H1 (cell line): ENCODE measurements at regions of chr17 and their contacts with region 1.

Region 1: DNA sequence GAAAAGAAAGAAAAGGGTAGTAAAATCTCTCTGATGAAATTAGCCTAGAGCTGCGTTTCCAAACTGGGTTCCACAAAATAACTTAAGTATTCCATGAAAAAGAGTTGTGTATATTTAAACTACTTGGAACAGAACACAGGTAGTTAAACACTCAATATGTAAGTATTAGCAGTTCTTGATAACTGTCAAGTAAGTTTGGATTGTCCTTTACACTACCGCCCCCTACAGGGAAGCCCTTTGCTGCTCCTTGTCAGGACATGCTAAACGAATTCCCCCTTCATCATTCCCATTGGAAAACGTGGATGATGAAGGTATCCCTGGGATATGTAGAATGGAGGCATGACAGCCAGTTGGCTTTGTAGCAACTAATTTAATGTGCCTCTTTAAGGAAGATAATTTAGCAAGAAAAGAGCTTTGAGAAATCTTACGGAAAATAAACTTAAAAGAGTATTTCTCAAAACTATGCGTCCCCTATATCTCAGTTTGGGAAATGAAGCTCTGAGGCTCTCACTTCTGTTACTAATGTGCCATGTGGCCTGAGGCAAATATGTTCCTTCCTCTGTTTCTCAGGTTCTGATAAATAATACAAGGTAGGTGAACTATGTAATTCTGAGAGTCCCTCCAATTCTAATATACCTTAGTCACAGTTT is 18.8 kb downstream of the NCBP3 start:
- DNase-seq: peak in 1 of 2 experiments; percentile 80
- H3K4me3 ChIP-seq: no peak overlapping the region
- H3K27ac ChIP-seq: no peak overlapping the region
- H3K4me1 ChIP-seq: no peaks in the 10 kb centered on the region
- H3K27me3 ChIP-seq: no peaks in the 10 kb centered on the region
- CTCF ChIP-seq: peak; percentile 37 to 87 (median 67)
- EP300 ChIP-seq: no peak
- POLR2A ChIP-seq: no peak
- RAD21 ChIP-seq: peak; percentile 70 to 76; a peak in 3 of 4 replicates

Region 2: DNA sequence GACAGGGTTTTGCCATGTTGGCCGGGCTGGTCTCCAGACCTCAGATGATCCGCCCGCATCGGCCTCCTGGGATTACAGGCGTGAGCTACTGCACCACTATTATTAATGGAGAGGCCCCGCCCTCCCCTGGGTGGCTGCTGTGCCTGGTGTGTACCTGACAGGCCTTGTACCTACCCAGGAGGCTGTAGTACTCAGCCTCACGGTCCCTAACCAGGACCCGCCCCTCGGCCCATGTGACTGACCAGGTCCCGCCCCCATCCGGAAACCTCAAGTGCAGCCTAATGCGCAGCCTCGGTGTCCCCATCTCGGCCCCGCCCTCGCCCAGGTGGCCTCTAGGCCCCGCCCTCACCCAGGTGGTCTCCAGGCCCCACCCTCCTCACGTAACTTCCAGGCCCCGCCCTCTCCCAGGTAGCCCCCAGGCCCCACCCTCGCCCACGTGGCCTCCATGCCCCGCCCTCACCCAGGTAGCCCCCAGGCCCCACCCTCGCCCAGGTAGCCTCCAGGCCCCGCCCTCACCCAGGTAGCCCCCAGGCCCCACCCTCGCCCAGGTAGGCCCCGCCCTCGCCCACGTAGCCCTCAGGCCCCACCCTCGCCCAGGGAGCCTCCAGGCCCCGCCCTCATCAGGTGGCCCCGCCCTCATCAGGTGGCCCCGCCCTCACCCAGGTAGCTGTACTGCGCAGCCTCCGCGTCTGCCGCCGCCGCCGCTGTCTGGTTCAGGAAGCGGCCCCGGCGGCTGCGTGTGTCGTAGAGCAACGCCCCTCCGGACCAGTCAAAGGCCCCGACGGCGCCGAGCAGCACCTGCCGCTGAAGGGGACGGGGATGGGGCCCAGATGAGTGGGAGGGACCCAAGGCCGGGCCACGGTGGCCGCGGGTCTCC is 72.6 kb before region 1 on chr17:
- CTCF ChIA-PET with region 1: interaction called, 11 read pairs
- POLR2A ChIA-PET with region 1: no interaction called
- DNase-seq: peak; percentile 99 to 100
- H3K4me3 ChIP-seq: peak overlapping the region; percentile 57 to 73 (median 66)
- H3K27ac ChIP-seq: peak overlapping the region; percentile 60; the same call in 1 of the 2 replicates
- H3K4me1 ChIP-seq: peaks cover 0 to 5% (median 3%) of the 10 kb centered on the region in 4 experiments; a peak in 4 of 7 replicates
- H3K27me3 ChIP-seq: no peaks in the 10 kb centered on the region
- CTCF ChIP-seq: no peak
- EP300 ChIP-seq: no peak
- POLR2A ChIP-seq: peak in 1 of 2 experiments; percentile 74; a peak in 2 of 3 replicates
- RAD21 ChIP-seq: no peak

Region 3: DNA sequence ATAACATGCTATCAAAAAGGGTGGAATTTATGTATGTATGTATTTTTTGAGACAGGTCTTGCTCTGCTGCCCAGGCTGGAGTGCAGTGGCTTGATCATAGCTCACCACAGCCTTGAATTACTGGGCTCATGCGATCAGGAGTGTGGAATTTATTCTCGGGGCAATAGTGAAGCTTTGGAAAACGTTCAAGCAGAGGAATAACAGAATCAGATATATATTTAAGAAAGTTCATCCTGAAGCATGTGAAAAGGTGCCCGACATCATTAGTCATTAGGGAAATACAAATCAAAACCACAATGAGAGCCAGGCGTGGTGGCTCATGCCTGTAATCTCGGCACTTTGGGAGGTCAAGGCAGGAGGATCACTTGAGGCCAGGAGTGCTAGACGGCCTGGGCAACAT is 18.5 kb before region 1 on chr17:
- CTCF ChIA-PET with region 1: interaction called, 18 read pairs
- POLR2A ChIA-PET with region 1: interaction called, 5 read pairs
- DNase-seq: no peak
- H3K4me3 ChIP-seq: no peak overlapping the region
- H3K27ac ChIP-seq: no peak overlapping the region
- H3K4me1 ChIP-seq: no peaks in the 10 kb centered on the region
- H3K27me3 ChIP-seq: no peaks in the 10 kb centered on the region
- CTCF ChIP-seq: no peak
- EP300 ChIP-seq: no peak
- POLR2A ChIP-seq: no peak
- RAD21 ChIP-seq: no peak

Region 4: GRCh38 chr17:3815925-3816324 is 11.3 kb before region 1 on chr17:
- CTCF ChIA-PET with region 1: interaction called, 13 read pairs
- POLR2A ChIA-PET with region 1: interaction called, 5 read pairs
- DNase-seq: no peak
- H3K4me3 ChIP-seq: no peak overlapping the region
- H3K27ac ChIP-seq: no peak overlapping the region
- H3K4me1 ChIP-seq: no peaks in the 10 kb centered on the region
- H3K27me3 ChIP-seq: no peaks in the 10 kb centered on the region
- CTCF ChIP-seq: no peak
- EP300 ChIP-seq: no peak
- POLR2A ChIP-seq: no peak
- RAD21 ChIP-seq: no peak; a peak in 1 of 4 replicates

Region 5: DNA sequence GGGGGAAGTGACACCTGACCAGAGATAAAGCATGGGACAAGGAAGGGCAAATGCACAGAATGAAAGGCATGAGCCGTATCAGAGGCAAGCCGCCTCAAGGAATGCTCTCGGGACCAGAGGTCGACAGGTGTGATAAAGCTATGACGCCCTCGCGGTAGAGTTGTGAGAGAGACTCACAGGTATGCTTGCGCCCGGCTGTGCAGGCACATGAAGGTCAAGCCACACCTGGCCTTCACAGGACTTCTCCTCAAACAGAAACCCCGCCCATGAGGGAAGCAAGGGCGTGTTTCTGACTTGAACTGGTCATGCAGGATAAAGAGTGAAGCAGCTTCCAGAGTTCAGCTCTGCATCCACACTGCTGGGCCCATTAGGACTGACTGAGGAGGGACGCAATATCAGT is 11.0 kb after region 1 on chr17:
- CTCF ChIA-PET with region 1: interaction called, 42 read pairs
- POLR2A ChIA-PET with region 1: interaction called, 6 read pairs
- DNase-seq: no peak
- H3K4me3 ChIP-seq: no peak overlapping the region
- H3K27ac ChIP-seq: no peak overlapping the region
- H3K4me1 ChIP-seq: no peaks in the 10 kb centered on the region
- H3K27me3 ChIP-seq: no peaks in the 10 kb centered on the region
- CTCF ChIP-seq: no peak
- EP300 ChIP-seq: no peak
- POLR2A ChIP-seq: no peak
- RAD21 ChIP-seq: no peak

Region 6: DNA sequence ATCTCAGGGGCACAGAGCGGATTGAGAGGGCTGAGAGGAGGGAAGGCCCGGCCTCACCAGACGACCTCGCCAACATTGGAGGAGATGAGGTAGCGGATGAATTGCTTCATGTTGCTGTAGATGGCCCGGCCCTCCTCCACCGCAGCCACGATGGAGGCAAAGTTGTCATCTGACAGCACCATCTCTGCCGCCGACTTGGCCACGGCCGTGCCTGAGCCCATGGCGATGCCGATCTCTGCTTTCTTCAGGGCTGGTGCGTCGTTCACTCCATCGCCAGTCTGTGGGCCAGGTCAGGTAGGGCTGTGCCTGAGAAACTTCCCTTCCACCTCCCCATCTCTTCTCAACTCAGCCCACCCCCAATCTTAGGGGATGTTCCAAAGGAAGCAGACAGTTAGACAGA is 110.1 kb after region 1 on chr17:
- CTCF ChIA-PET with region 1: no interaction called
- POLR2A ChIA-PET with region 1: no interaction called
- DNase-seq: no peak
- H3K4me3 ChIP-seq: no peak overlapping the region
- H3K27ac ChIP-seq: no peak overlapping the region
- H3K4me1 ChIP-seq: no peaks in the 10 kb centered on the region
- H3K27me3 ChIP-seq: no peaks in the 10 kb centered on the region
- CTCF ChIP-seq: no peak
- EP300 ChIP-seq: no peak
- POLR2A ChIP-seq: no peak
- RAD21 ChIP-seq: no peak

Region 7: GRCh38 chr17:4215882-4216570 is 388.8 kb after region 1 on chr17:
- CTCF ChIA-PET with region 1: no interaction called
- POLR2A ChIA-PET with region 1: no interaction called
- DNase-seq: no peak
- H3K4me3 ChIP-seq: no peak overlapping the region
- H3K27ac ChIP-seq: no peak overlapping the region
- H3K4me1 ChIP-seq: no peaks in the 10 kb centered on the region
- H3K27me3 ChIP-seq: no peaks in the 10 kb centered on the region
- CTCF ChIP-seq: no peak
- EP300 ChIP-seq: no peak
- POLR2A ChIP-seq: no peak
- RAD21 ChIP-seq: no peak